Naive thymus-derived CD4-positive, alpha-beta T cell (primary cell): ENCODE measurements at regions of chr2 and their contacts with region 1.

Region 1: DNA sequence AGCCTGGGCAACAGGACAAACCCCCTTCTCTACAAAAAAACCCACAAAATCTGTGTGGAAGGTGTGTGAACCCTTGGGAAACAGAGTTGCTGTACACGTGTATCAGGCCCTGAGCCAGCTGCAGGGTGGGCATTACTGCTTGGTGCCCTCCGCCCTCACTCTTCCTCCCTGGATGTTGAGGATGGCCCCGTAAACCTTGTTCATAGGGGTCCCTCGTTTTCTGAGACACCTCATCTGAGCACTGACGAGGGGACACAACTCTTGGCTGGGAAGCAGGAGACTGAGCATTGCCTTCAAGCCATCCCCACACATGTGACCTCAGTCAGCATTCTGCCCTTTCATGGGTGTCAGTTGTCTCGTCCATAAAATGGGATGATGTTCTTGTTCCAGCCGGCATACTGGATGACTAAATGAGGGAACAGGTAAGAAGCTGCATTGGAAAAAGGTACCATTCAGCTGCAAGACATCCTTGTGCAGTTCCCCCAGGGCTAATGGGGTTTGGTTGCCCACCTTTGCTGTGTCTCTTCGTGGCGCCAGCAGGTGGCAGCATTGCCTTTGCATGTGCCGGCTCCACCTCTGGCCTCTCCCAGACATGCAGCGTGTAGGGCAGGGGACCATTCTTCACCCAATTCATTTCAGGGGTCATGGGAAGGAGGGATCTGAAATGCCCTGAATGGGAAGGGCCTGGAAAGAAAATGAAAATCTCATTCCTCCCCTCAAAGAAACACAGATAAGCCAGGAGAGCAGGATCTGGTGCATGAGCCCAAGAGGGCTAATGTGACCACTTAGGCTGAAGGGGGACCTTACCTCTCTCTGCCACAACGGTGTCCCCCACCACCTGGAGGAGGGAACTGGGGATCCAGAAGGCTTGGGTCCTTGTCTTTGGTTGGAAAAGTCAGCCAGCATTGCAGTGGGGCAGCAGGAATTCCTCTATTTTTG is 36.4 kb upstream of the HAAO start:
- DNase-seq: peak; percentile 44 to 69 (median 63)
- ATAC-seq: peak; percentile 93
- H3K4me3 ChIP-seq: no peak overlapping the region
- H3K4me3 Mint-ChIP-seq: peak overlapping the region in 6 of 10 donors; percentile 18 to 47 (median 21)
- H3K27ac ChIP-seq: no peak overlapping the region
- H3K27ac Mint-ChIP-seq: peak overlapping the region in 2 of 9 donors; percentile 21 to 25
- H3K4me1 ChIP-seq: peaks cover 3 to 6% of the 10 kb centered on the region in 2 donors
- H3K4me1 Mint-ChIP-seq: peaks cover 7 to 19% (median 14%) of the 10 kb centered on the region in 7 donors
- H3K27me3 ChIP-seq: no peaks in the 10 kb centered on the region
- H3K27me3 Mint-ChIP-seq: peaks cover 0 to 8% (median 5%) of the 10 kb centered on the region in 5 donors

Region 2: GRCh38 chr2:43169987-43170386 is 341.2 kb after region 1 on chr2:
- CTCF ChIA-PET with region 1: no interaction called
- POLR2A ChIA-PET with region 1: no interaction called
- intact Hi-C with region 1: no loop called
- DNase-seq: peak in 8 of 9 donors; percentile 51 to 74 (median 64)
- ATAC-seq: peak; percentile 26
- H3K4me3 ChIP-seq: peak overlapping the region; percentile 35
- H3K4me3 Mint-ChIP-seq: peak overlapping the region; percentile 68 to 91 (median 84)
- H3K27ac ChIP-seq: peak overlapping the region; percentile 99
- H3K27ac Mint-ChIP-seq: peak overlapping the region; percentile 94 to 100 (median 98)
- H3K4me1 ChIP-seq: peaks cover 64 to 70% of the 10 kb centered on the region in 2 donors
- H3K4me1 Mint-ChIP-seq: peaks cover 52 to 89% (median 76%) of the 10 kb centered on the region in 7 donors
- H3K27me3 ChIP-seq: no peaks in the 10 kb centered on the region
- H3K27me3 Mint-ChIP-seq: no peaks in the 10 kb centered on the region

Region 3: DNA sequence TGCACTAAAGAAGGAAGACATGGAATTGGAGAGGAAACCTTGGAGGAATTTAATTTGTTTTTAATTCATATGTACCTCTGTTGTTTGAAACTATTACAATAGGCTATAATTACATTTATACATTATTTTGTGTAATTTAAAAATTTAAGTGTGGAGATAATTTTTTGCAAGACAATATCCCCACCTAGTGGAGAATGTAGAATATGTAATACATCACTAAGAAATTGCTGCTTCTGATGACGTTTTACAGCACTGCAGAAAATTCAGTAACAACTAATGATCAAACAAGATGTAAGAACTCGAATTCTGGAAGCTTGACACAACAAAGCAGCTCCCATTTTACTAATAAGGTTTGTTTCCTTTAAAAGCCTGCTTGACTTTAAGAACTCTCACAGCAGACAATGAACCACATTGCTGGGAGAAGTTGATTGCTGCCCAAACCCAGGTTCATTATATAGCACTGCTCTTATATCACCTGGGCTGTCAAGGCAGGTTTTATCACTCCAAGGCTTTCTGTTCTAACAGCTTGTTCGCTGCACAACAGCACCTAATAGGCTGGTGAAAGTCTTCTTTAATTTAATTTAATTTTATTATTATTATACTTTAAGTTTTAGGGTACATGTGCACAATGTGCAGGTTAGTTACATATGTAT is 713.7 kb after region 1 on chr2:
- CTCF ChIA-PET with region 1: interaction called, 7 read pairs
- POLR2A ChIA-PET with region 1: no interaction called
- intact Hi-C with region 1: loop called in 1 of 2 experiments (anchors 1 kb)
- DNase-seq: peak in 7 of 9 donors; percentile 43 to 70 (median 48)
- ATAC-seq: peak; percentile 82
- H3K4me3 ChIP-seq: no peak overlapping the region
- H3K4me3 Mint-ChIP-seq: no peak overlapping the region
- H3K27ac ChIP-seq: no peak overlapping the region
- H3K27ac Mint-ChIP-seq: no peak overlapping the region
- H3K4me1 ChIP-seq: peaks cover 0 to 3% of the 10 kb centered on the region in 2 donors
- H3K4me1 Mint-ChIP-seq: peaks cover 9 to 18% (median 15%) of the 10 kb centered on the region in 7 donors
- H3K27me3 ChIP-seq: no peaks in the 10 kb centered on the region
- H3K27me3 Mint-ChIP-seq: no peaks in the 10 kb centered on the region

Region 4: GRCh38 chr2:43576981-43577892 is 748.5 kb after region 1 on chr2:
- CTCF ChIA-PET with region 1: interaction called, 4 read pairs
- POLR2A ChIA-PET with region 1: no interaction called
- intact Hi-C with region 1: loop called in 1 of 2 experiments (anchors 1 kb)
- DNase-seq: peak in 7 of 9 donors; percentile 15 to 54 (median 44)
- ATAC-seq: peak; percentile 70
- H3K4me3 ChIP-seq: no peak overlapping the region
- H3K4me3 Mint-ChIP-seq: no peak overlapping the region
- H3K27ac ChIP-seq: no peak overlapping the region
- H3K27ac Mint-ChIP-seq: no peak overlapping the region
- H3K4me1 ChIP-seq: no peaks in the 10 kb centered on the region
- H3K4me1 Mint-ChIP-seq: peaks cover 0 to 12% (median 6%) of the 10 kb centered on the region in 7 donors
- H3K27me3 ChIP-seq: no peaks in the 10 kb centered on the region
- H3K27me3 Mint-ChIP-seq: no peaks in the 10 kb centered on the region